ENCODE measurements at regions of chr3 and their contacts with region 1.

Region 1: GRCh38 chr3:156151824-156152428 is 31.5 kb downstream of the KCNAB1 start:
- DNase-seq: peak in 3 of 4 donors; percentile 38 to 78 (median 71)
- ATAC-seq: peak; percentile 88
- H3K4me3 ChIP-seq: no peak overlapping the region
- H3K27ac ChIP-seq: no peak overlapping the region
- H3K4me1 ChIP-seq: peaks cover 0 to 13% of the 10 kb centered on the region in 2 donors
- H3K27me3 ChIP-seq: no peaks in the 10 kb centered on the region
- CTCF ChIP-seq: peak; percentile 47 to 63

Region 2: DNA sequence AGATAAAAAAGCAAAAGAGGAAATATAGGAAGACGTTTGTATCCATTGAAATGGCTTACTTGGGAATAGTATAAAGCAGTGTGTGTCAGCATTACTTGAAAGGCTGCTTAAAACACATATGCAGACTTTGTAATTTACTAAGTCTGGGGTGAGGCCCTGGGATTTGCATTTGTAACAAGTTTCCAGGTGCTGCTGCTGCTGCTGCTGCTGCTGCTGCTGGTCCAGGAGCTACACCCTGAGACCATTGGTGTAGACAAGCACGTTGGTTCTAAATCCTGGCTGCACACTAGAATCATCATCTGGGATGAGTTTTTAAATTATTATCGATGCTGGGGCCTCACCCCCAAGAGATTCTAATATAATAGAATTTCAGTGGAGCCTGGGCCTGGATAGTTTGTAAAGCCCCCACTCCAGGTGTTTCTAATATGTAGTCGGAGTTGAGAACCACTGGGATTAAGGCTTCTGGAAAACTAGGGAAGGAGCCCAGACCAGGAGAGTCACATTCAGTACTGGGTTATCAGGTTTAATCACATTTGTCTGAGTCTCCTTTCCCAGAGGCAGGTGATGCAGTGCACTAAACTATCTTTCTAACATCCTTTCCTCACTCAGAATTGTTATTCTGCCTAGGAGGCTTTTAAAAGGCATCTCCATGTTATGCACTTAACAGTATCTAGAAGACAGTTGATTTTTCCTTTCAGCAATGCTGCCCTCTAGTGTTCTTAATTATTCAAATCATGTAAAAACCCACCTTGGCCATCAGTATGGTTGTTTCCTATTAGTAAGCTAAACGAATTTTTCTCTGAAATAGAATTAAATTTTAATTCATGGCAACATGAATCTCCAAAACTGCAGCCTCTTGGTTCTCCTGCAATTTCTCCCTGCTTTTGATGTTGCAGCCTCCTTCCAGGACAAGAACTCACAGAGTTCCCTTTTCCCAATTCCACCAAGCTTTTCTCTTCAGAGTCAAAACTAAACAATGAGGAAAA is 357.6 kb after region 1 on chr3:
- intact Hi-C with region 1: loop called in 1 of 2 experiments (anchors 10 kb)
- DNase-seq: peak in 2 of 4 donors; percentile 28 to 57
- ATAC-seq: peak; percentile 88
- H3K4me3 ChIP-seq: no peak overlapping the region
- H3K27ac ChIP-seq: no peak overlapping the region
- H3K4me1 ChIP-seq: no peaks in the 10 kb centered on the region
- H3K27me3 ChIP-seq: no peaks in the 10 kb centered on the region
- CTCF ChIP-seq: peak; percentile 59 to 68